GM10248 (cell line): ENCODE measurements at regions of chr10 and their contacts with region 1.

Region 1: DNA sequence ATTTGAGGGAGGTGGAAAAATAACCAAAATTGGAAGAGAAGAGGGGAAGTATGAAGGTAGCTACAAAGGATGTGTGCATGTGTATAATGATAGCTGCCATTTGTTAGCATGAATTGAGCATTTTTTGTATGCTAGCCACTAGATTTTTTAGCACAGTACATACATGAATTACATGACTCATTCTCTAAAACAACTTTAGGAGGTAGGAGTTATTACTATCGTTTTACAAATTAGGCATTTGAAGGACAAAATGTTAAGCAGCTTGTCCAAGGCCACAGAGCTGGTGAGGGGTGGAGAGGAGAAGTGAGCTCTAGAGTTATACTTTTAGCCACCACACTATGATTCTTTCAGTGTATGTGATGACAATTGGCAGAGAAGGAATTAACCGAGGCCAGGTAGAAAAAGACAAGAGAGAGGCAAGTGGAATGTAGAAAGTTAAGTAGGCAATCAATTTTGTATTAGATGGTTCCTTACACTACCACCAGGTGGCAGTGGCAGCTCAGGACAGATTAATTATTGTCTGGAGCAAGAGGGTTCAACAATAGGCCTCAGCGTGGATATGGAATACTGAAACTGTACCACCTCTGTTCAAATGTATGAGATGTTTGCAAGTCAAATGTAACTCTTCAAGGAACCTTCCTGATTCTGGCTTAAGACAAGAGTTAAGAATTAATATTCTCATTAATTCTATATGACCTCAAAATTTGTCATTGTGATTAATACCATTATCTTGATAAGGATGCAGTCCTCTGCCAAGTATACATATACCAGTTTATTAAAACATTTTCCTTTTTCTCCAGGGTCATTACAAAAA is 128.0 kb downstream of the MBL2 start:
- DNase-seq: peak; percentile 20
- CTCF ChIP-seq: peak; percentile 60

Region 2: GRCh38 chr10:52627279-52627678 is 17.3 kb before region 1 on chr10:
- CTCF ChIA-PET with region 1: interaction called, 21 read pairs
- POLR2A ChIA-PET with region 1: no interaction called
- DNase-seq: no peak
- CTCF ChIP-seq: no peak

Region 3: GRCh38 chr10:52668024-52668423 is 23.4 kb after region 1 on chr10:
- CTCF ChIA-PET with region 1: interaction called, 10 read pairs
- POLR2A ChIA-PET with region 1: no interaction called
- DNase-seq: no peak
- CTCF ChIP-seq: no peak

Region 4: DNA sequence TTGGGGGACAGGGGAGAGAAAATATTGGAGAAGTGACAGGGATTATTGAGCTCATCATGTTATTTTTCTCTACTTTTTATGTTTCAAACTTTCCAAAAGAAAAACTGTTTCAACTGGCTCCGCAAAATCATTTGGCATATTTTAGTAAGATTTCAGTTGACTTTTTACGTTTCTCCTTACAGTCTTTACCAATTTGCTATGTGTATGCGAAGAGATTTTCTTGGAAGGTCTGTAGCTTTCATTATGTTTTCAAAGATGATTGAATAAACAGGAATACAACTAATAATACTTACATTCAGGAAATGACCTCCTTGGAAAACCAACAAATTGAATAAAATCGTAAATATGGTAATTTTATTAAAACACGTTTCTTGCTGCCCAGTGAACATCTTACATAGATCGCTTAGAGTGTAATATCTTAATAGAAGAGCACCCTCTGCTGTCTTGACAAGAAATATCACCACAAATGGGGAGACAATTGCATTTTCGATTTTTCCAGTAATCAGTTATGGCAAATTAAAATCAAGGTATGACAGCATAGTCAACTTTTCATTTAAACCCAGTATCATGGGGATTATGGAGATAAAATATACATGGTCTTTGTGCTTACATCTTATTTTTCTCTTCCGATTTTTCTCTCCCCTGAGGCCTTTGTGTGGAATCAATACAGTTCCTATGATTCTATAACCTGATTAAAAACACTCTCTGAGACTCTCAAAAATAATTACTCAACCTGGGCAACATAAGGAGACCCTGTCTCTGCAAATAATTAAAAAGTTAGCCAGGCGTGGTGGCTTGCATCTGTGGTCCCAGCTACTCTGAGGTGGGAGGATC is 84.9 kb after region 1 on chr10:
- CTCF ChIA-PET with region 1: interaction called, 73 read pairs
- POLR2A ChIA-PET with region 1: no interaction called
- DNase-seq: peak; percentile 33
- CTCF ChIP-seq: peak; percentile 31

Region 5: DNA sequence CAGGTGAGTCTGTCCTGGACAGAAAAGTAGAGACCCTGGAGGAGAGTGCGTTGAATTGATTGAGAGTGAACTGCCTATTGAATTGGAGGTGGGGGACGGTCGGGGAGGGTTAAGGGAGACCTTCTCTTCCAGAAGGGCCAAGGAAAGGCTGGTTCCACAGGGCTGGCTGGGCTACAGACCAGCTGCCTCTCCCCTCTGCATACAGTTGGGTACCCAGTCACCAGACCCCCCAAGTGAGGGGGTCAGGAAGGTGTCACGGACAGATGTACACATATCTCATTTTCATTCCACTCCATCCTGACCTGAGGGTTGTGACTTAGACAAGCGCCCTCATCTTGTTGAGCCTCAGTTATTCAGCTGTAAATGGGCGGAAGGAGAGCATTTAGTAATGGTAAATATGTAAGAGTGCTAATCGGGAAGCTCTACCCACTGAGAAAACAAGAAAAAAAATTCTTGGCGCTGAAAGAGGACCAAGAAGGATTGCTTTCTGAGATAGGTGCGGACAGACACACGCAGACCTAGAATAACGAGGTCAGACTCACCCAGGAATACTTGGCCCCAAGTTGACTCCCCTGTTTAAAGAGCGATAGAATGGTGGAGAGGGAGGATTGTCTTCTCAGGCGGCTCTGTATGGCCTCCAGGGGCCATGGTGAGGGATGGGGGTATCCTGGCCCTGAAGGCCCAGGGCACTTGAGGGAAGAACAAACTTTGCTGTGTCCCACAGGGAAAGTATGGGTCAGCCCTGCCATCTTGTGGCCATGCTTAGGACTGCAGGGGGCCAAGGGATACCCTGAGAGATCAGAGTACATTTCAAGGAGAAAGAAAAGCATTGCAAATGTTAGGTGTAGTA is 135.2 kb after region 1 on chr10:
- CTCF ChIA-PET with region 1: interaction called, 115 read pairs
- POLR2A ChIA-PET with region 1: no interaction called
- DNase-seq: peak; percentile 71
- CTCF ChIP-seq: peak; percentile 94